ENCODE measurements at regions of chr7 and their contacts with region 1.

Region 1: DNA sequence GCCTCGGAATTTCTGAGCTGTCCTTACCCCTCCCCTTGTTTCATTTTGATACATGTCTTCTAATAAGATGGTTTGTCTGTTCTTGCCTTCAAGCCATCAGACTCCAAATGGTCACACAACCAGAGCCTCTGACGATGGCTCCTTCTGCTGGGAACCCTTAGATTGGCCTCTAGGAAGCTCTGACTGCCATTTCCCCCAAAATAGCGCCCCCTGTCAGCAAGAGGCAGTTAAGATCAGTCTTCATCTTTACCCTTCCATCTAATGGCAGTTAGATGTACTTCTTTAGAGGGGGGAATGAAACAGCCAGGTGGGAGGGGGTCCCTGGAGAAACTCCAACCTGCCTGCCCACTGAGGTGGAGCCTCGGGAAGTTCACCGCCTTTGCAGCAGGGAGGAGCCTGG is 85.8 kb upstream of the GPR22 start:
- DNase-seq: no peak
- ATAC-seq: no peak
- H3K4me3 ChIP-seq: no peak overlapping the region
- H3K27ac ChIP-seq: no peak overlapping the region
- H3K4me1 ChIP-seq: peaks cover 12% of the 10 kb centered on the region
- H3K27me3 ChIP-seq: no peaks in the 10 kb centered on the region
- CTCF ChIP-seq: peak; percentile 40; the same call in 1 of the 2 replicates

Region 2: GRCh38 chr7:107372298-107372697 is 11.7 kb before region 1 on chr7:
- CTCF ChIA-PET with region 1: no interaction called
- POLR2A ChIA-PET with region 1: interaction called, 23 read pairs
- intact Hi-C with region 1: no loop called
- DNase-seq: peak; percentile 57
- ATAC-seq: peak; percentile 96
- H3K4me3 ChIP-seq: no peak overlapping the region
- H3K27ac ChIP-seq: peak overlapping the region; percentile 24
- H3K4me1 ChIP-seq: peaks cover 17% of the 10 kb centered on the region
- H3K27me3 ChIP-seq: no peaks in the 10 kb centered on the region
- CTCF ChIP-seq: no peak

Region 3: DNA sequence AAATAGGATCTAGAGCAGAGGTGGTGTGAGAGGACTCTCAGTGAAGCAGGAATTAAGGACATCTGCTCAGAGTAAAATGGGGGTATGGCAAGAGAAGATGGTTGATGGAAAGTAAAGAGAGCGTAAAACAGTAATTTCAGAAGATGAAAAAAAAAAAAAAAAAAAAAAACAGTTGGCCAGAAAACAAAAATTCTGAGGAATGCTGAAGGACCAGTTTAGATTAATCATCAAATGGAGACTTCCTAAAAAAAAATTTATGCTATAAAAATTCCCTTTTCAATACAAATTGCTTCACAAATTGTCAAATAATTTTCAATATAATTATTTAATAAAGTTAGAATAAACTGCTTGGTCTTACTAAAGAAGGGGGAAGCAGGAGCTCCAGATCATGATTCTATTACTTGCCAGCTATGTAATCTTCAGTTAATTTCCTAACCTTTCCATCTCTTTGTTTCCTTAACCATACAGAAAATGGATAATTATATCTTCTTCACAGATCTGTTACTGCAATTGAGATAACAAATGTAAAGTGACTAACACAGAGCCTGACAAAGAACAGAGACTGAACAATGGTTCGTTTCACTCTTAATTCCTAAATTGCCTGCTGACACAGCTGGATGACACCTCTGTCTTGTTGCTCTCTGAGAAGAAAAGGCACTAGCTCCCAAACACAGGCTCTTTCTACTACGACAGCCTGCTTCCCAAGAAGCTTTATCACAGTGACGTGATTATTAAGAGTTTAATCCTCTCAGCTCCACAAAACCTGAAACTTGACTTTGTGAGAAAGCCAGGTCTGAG is 20.9 kb after region 1 on chr7:
- CTCF ChIA-PET with region 1: no interaction called
- POLR2A ChIA-PET with region 1: interaction called, 13 read pairs
- intact Hi-C with region 1: no loop called
- DNase-seq: peak; percentile 53
- ATAC-seq: no peak; the same call in 1 of the 2 replicates
- H3K4me3 ChIP-seq: no peak overlapping the region
- H3K27ac ChIP-seq: peak overlapping the region; percentile 11
- H3K4me1 ChIP-seq: peaks cover 19% of the 10 kb centered on the region
- H3K27me3 ChIP-seq: no peaks in the 10 kb centered on the region
- CTCF ChIP-seq: no peak